ENCODE measurements at regions of chr2 and their contacts with region 1.

Region 1: DNA sequence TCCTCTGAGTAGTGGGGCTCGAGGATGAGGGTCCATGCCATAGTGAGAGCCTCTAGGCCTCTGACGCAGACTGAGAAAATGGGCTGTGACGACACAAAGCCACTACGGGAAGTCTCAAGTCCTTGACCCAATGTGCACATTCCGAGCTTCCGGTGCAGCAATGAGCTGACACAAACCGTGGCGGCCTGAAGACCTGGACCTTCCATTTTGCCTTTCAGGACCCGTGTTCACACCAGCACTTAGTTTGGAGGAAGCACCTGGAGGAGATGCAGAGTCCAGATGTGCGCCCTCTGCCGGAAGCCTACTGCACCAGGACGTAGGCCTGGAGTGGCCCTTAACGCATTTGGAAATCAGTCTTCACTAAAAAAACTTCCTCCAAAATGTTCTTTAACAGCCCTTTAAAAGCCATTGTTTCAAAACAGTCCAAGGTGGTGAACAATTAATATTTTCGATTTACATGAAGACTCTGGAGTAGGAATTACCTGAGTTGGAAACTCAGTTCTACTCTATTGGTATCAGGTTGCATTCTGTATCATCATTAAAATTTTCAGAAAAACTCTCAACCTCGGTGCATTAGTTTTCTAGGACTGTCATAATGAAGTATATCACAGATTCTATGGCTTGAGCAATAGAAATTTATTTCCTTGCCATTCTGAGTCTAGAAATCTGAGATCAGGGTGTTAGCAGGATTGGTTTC is 33.9 kb downstream of the BMP10 start:
- DNase-seq: peak; percentile 86 to 94 (median 94)
- H3K4me3 ChIP-seq: peak overlapping the region in 1 of 7 experiments; percentile 24
- H3K27ac ChIP-seq: no peak overlapping the region
- H3K4me1 ChIP-seq: peaks cover 31 to 56% (median 51%) of the 10 kb centered on the region in 4 experiments
- H3K27me3 ChIP-seq: no peaks in the 10 kb centered on the region

Region 2: GRCh38 chr2:68653538-68653982 is 183.8 kb before region 1 on chr2:
- CTCF ChIA-PET with region 1: no interaction called
- POLR2A ChIA-PET with region 1: no interaction called
- DNase-seq: peak; percentile 61 to 77 (median 72)
- H3K4me3 ChIP-seq: peak overlapping the region in 3 of 7 experiments; percentile 21 to 54 (median 47)
- H3K27ac ChIP-seq: no peak overlapping the region
- H3K4me1 ChIP-seq: peaks cover 7 to 40% (median 24%) of the 10 kb centered on the region in 4 experiments
- H3K27me3 ChIP-seq: no peaks in the 10 kb centered on the region

Region 3: DNA sequence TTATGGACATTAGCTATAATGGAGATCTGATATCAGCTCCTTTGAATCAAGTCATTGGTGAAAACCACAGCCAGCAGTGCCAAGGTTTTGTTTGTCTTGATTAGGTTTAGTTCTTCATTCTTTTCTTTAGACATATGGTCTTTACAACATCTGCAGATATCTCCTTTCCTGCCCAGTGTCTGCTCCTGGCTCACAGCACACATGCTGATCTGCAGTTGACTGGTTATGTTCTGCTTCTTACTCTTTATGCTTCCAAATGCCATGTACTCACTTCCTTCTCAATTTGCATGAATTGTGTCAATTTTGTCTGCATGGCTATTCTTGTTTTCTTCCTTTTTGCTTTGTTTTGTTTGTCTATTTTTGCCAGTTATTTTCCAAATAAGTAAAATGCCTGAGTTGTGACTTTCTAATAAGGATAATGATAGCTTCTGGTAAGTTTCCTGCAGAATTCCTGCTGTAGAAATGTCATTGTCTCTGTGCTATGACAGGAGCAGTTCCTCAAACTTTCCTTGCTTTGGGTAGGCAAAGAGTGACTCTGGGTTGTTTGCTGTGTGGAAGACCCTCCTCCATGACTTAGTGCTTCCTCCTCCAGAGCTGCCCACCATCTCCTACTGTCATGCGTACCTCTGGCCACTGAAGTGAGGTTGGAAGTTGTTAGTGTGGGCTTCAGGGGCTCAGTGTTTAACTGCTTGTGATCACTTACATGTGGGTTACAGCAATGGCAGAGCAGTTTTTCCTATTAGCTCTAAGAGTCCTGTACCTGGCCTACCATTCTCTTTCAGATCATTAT is 94.5 kb before region 1 on chr2:
- CTCF ChIA-PET with region 1: interaction called, 13 read pairs
- POLR2A ChIA-PET with region 1: no interaction called
- DNase-seq: peak; percentile 45 to 91 (median 86)
- H3K4me3 ChIP-seq: peak overlapping the region in 4 of 7 experiments; percentile 21 to 44 (median 27)
- H3K27ac ChIP-seq: peak overlapping the region; percentile 4 to 62
- H3K4me1 ChIP-seq: peaks cover 60 to 98% (median 91%) of the 10 kb centered on the region in 4 experiments
- H3K27me3 ChIP-seq: no peaks in the 10 kb centered on the region

Region 4: GRCh38 chr2:68811364-68811763 is 25.9 kb before region 1 on chr2:
- CTCF ChIA-PET with region 1: interaction called, 25 read pairs
- POLR2A ChIA-PET with region 1: no interaction called
- DNase-seq: peak in 2 of 3 donors; percentile 29 to 36
- H3K4me3 ChIP-seq: no peak overlapping the region
- H3K27ac ChIP-seq: peak overlapping the region in 1 of 2 experiments; percentile 29
- H3K4me1 ChIP-seq: peaks cover 8 to 55% (median 36%) of the 10 kb centered on the region in 4 experiments
- H3K27me3 ChIP-seq: no peaks in the 10 kb centered on the region

Region 5: DNA sequence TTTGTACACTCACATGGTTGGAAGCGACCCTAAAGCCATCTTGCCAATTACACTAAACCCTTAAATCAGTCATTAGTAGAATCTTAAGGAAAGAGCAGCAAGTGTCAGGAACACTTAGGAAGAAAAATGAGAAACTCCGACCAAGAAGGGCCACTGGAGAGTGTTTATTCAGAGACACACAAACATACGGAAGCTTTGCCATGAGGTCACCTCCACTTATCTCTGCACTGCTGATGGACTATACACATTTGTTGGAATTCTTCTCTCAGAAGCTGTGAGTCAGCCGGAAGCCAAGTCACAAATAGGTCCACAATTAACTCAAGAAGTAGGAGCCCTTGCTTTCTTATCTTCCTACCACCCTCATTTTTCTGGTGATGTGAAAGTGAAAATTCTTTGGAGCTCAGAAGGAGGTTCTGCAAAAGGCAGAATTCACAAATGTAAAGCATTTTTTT is 12.3 kb after region 1 on chr2:
- CTCF ChIA-PET with region 1: interaction called, 27 read pairs
- POLR2A ChIA-PET with region 1: no interaction called
- DNase-seq: no peak
- H3K4me3 ChIP-seq: no peak overlapping the region
- H3K27ac ChIP-seq: no peak overlapping the region
- H3K4me1 ChIP-seq: no peaks in the 10 kb centered on the region
- H3K27me3 ChIP-seq: no peaks in the 10 kb centered on the region

Region 6: GRCh38 chr2:68909793-68910674 is 72.7 kb after region 1 on chr2:
- CTCF ChIA-PET with region 1: interaction called, 25 read pairs
- POLR2A ChIA-PET with region 1: no interaction called
- DNase-seq: peak; percentile 85 to 91 (median 88)
- H3K4me3 ChIP-seq: no peak overlapping the region
- H3K27ac ChIP-seq: no peak overlapping the region
- H3K4me1 ChIP-seq: peaks cover 11 to 74% (median 65%) of the 10 kb centered on the region in 4 experiments
- H3K27me3 ChIP-seq: no peaks in the 10 kb centered on the region